PC-9 (cell line): ENCODE measurements at regions of chr3 and their contacts with region 1.

Region 1: GRCh38 chr3:109685084-109686079 is 348.0 kb upstream of the DPPA4 start:
- DNase-seq: peak; percentile 87 to 89
- H3K4me3 ChIP-seq: no peak overlapping the region
- H3K27ac ChIP-seq: peak overlapping the region; percentile 31; the same call in 1 of the 2 replicates
- H3K4me1 ChIP-seq: peaks cover 13% of the 10 kb centered on the region
- H3K27me3 ChIP-seq: no peaks in the 10 kb centered on the region
- CTCF ChIP-seq: no peak

Region 2: GRCh38 chr3:108388136-108389132 is 1296.9 kb before region 1 on chr3:
- CTCF ChIA-PET with region 1: no interaction called
- POLR2A ChIA-PET with region 1: no interaction called
- intact Hi-C with region 1: no loop called
- DNase-seq: no peak
- H3K4me3 ChIP-seq: no peak overlapping the region
- H3K27ac ChIP-seq: no peak overlapping the region
- H3K4me1 ChIP-seq: 0 out of 2 replicates have a peak, but pooled peaks cover 5% of the 10 kb centered on the region
- H3K27me3 ChIP-seq: no peaks in the 10 kb centered on the region
- CTCF ChIP-seq: no peak

Region 3: DNA sequence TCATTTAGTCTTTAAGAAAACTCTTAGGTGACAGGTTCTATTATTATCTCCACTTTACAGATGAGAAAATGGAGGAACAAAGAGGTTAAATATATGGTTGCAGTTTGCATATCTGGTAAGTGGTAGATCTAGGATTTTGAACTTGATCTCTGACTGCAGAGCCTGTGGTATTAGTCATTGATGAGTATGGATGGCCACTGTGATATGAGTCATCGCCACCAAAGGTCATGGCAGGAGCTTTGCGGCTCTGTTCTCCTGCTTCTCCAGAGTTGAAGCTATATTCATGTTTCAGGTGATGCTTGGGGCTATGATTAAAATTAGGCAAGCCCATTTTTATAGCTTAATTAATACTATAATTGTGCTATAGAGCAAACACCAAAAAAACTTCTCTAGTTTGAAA is 41.8 kb before region 1 on chr3:
- CTCF ChIA-PET with region 1: no interaction called
- POLR2A ChIA-PET with region 1: no interaction called
- intact Hi-C with region 1: loop called (anchors 1 kb)
- DNase-seq: peak; percentile 55 to 83
- H3K4me3 ChIP-seq: no peak overlapping the region
- H3K27ac ChIP-seq: peak overlapping the region; percentile 17
- H3K4me1 ChIP-seq: peaks cover 40% of the 10 kb centered on the region
- H3K27me3 ChIP-seq: no peaks in the 10 kb centered on the region
- CTCF ChIP-seq: no peak

Region 4: DNA sequence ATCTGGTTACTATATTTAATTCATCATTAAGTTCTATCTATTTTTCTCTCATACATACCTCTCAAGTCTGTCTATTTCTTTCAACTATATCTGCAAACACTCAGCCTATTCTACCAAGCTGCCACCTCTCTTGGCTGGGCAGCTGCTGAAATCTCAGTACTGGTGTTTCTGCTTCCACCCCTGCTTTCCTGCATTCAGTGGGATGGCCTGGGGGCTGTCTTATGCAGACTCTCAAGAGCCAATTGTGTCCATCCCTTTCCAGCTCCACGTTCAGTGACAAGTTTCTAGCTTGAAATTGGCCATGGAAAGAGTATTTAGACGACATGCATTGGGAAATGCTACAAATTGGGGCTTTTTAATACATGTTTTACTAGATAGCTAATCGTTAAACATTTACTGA is 30.3 kb after region 1 on chr3:
- CTCF ChIA-PET with region 1: no interaction called
- POLR2A ChIA-PET with region 1: no interaction called
- intact Hi-C with region 1: no loop called
- DNase-seq: no peak
- H3K4me3 ChIP-seq: no peak overlapping the region
- H3K27ac ChIP-seq: no peak overlapping the region
- H3K4me1 ChIP-seq: no peaks in the 10 kb centered on the region
- H3K27me3 ChIP-seq: 0 out of 2 replicates have a peak, but pooled peaks cover 11% of the 10 kb centered on the region
- CTCF ChIP-seq: no peak